Activated CD4-positive, alpha-beta T cell treated with anti-CD3 and anti-CD28 coated beads for 36 hours (primary cell): ENCODE measurements at regions of chr5 and their contacts with region 1.

Region 1: DNA sequence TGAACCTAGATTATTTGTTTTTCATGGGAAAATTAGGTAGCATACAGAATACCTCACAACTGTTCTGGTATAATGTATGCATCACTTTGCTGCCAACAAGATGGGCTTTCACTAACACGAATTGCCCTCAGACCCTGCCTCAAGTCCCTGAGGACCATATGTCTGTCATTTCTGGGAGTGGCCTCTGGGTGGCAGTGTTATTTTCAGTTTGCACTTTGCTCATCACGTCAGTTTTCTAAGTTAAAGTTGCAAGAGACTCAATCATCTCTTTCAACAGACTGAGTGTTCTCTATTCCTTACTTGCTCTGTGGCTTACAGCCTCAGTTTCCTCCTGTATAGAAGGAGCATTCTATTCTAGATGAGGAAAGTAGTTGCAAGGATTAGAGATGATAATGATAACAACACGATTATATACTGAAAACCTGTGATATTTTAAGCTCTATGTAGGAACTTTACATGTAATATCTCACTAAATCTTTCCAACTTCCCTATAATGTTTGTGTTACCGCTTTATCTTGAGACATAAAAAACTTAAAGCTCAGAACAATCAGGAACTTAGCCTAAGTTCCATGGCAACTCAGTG is 55.7 kb downstream of the TSSK1B start:
- DNase-seq: peak; percentile 75
- ATAC-seq: peak; percentile 74
- H3K4me3 Mint-ChIP-seq: no peak overlapping the region
- H3K27ac Mint-ChIP-seq: no peak overlapping the region
- H3K4me1 Mint-ChIP-seq: peaks cover 31% of the 10 kb centered on the region
- H3K27me3 Mint-ChIP-seq: peaks cover 15% of the 10 kb centered on the region

Region 2: DNA sequence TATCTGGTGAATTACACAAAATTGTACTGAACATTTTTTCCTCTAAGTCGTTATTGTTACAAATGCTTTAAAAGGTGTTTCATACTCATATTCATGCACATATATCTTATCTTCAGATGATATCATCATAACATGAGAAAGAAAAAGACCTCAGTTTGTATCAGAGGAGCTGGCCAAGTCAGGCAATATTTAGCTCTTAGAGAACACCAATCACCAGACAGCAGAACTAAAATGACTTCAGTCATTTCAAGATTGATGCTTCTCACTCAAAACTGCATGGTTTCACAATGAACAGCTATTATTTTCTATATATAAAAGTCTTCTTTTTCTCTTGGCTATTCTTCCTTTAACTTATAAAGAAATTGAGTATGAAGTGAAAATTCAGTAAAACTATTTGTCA is 11.2 kb after region 1 on chr5:
- CTCF ChIA-PET with region 1: interaction called, 24 read pairs
- POLR2A ChIA-PET with region 1: no interaction called
- intact Hi-C with region 1: no loop called
- DNase-seq: no peak
- ATAC-seq: no peak
- H3K4me3 Mint-ChIP-seq: no peak overlapping the region
- H3K27ac Mint-ChIP-seq: no peak overlapping the region
- H3K4me1 Mint-ChIP-seq: no peaks in the 10 kb centered on the region
- H3K27me3 Mint-ChIP-seq: peaks cover 10% of the 10 kb centered on the region

Region 3: GRCh38 chr5:113487781-113488644 is 109.0 kb after region 1 on chr5 and contains the start of gene MCC:
- CTCF ChIA-PET with region 1: no interaction called
- POLR2A ChIA-PET with region 1: no interaction called
- intact Hi-C with region 1: loop called in 1 of 2 experiments (anchors 10 kb)
- DNase-seq: peak; percentile 60
- ATAC-seq: peak; percentile 68
- H3K4me3 Mint-ChIP-seq: peak within 1 kb of the TSS; percentile 69
- H3K27ac Mint-ChIP-seq: peak within 1 kb of the TSS; percentile 4
- H3K4me1 Mint-ChIP-seq: peaks cover 20% of the 10 kb centered on the region
- H3K27me3 Mint-ChIP-seq: peaks cover 68% of the 10 kb centered on the region
- total RNA-seq, gene MCC: 1.9 to 2.4 TPM